Dendritic cell treated with granulocyte-macrophage colony-stimulating factor and Interleukin-4, amounts not matched to agents 40 ng/mL and 50 ng/mL, for 4 days (primary cell): ENCODE measurements at regions of chr2 and their contacts with region 1.

Region 1: GRCh38 chr2:46461011-46461674 is 18.2 kb upstream of the TMEM247 start:
- H3K4me3 Mint-ChIP-seq: peak overlapping the region; percentile 45
- H3K27ac Mint-ChIP-seq: peak overlapping the region; percentile 91
- H3K4me1 Mint-ChIP-seq: peaks cover 40% of the 10 kb centered on the region
- H3K27me3 Mint-ChIP-seq: peaks cover 2% of the 10 kb centered on the region

Region 2: GRCh38 chr2:45889053-45889452 is 572.1 kb before region 1 on chr2:
- intact Hi-C with region 1: no loop called
- H3K4me3 Mint-ChIP-seq: no peak overlapping the region
- H3K27ac Mint-ChIP-seq: no peak overlapping the region
- H3K4me1 Mint-ChIP-seq: peaks cover 88% of the 10 kb centered on the region
- H3K27me3 Mint-ChIP-seq: peaks cover 15% of the 10 kb centered on the region

Region 3: DNA sequence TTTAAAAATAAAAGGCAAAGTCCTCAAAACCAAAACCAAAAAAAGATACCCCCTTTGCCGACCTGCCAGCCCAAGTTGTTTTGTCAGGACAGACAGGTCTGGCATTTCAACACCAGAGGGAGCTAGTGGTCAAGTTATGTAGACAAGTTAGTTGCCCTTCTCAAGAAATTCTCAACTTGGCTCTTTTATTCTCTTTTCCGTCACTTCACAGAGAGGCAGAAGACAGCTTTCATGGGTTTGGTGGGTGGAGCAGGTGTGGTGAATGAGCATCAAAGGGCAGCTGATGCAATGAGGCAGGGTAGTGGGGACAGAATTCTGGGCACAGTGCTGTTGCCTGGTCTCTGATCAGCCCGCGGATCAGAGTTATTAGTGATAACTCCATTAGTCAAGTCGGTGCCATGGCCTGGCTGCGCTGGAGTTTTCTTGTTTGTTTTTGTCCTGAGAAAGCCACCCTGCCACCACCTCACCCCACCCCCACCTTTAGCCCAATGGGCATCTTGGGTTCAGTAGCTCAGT is 467.6 kb before region 1 on chr2:
- intact Hi-C with region 1: loop called (anchors 1 kb)
- H3K4me3 Mint-ChIP-seq: no peak overlapping the region
- H3K27ac Mint-ChIP-seq: no peak overlapping the region
- H3K4me1 Mint-ChIP-seq: peaks cover 6% of the 10 kb centered on the region
- H3K27me3 Mint-ChIP-seq: no peaks in the 10 kb centered on the region

Region 4: GRCh38 chr2:46010925-46011490 is 450.1 kb before region 1 on chr2:
- intact Hi-C with region 1: loop called (anchors 1 kb)
- H3K4me3 Mint-ChIP-seq: no peak overlapping the region
- H3K27ac Mint-ChIP-seq: no peak overlapping the region
- H3K4me1 Mint-ChIP-seq: no peaks in the 10 kb centered on the region
- H3K27me3 Mint-ChIP-seq: no peaks in the 10 kb centered on the region

Region 5: DNA sequence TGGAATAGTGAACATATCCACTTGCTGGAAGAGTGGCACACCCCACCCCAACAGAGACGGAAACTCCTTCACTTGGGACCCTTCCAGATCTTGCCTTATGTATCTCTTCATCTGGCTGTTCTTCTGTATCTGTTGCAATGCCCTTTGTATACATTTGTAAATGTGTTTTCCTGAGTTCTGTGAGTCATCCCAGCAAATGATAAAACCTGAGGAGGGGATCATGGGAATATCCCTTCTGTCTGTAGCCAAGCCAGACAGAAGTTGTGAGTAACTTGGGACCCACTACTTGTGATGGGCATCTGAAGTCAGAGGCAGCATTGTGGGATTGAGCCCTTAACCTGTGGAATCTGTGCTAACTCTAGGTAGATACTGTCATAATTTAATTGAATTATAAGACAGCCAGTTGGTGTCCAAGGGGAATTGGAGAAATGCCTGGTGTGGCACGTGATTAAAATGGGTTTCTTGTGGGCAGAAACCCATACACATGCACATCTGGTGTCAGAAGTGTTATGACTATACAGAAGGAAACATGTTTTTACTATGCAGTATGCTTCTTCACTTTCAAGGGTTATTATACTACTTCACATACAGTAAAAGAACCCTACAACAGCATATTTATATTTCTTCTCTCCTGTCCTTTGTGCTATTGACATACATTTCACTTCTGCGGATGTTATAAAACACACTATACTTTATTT is 14.1 kb before region 1 on chr2:
- intact Hi-C with region 1: no loop called
- H3K4me3 Mint-ChIP-seq: no peak overlapping the region
- H3K27ac Mint-ChIP-seq: no peak overlapping the region
- H3K4me1 Mint-ChIP-seq: no peaks in the 10 kb centered on the region
- H3K27me3 Mint-ChIP-seq: no peaks in the 10 kb centered on the region

Region 6: DNA sequence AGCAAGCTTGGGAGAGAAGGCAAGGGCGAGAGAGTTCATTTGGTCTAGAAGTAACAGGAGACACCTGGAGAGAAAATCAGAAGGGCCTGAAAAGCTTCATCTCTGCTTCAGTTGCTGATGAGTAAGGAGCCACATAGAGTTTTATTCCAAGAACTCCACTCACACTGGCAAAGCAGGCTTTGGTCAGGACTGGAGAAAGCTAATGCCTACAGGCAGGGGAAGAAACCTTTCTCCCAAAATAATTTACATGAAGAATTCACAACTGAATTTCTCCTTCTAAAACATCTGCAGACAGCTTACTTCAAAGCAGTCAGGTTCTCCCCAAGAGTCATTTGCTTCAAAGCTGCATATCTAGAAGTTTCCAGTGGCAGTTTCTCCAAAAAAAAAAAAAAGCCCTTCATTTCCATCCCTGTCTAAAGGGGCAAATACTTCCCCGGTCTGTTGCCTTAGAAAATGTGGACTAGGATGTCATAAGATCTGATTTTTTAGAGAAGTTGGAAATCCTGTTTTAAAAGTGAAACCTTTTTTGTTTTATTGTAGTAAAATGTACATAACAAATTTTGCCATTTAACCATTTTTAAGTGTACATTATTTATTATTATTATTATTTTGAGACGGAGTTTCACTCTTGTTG is 64.5 kb after region 1 on chr2:
- intact Hi-C with region 1: no loop called
- H3K4me3 Mint-ChIP-seq: no peak overlapping the region
- H3K27ac Mint-ChIP-seq: peak overlapping the region; percentile 14
- H3K4me1 Mint-ChIP-seq: peaks cover 47% of the 10 kb centered on the region
- H3K27me3 Mint-ChIP-seq: no peaks in the 10 kb centered on the region

Region 7: GRCh38 chr2:47119001-47119400 is 657.9 kb after region 1 on chr2:
- intact Hi-C with region 1: no loop called
- H3K4me3 Mint-ChIP-seq: no peak overlapping the region
- H3K27ac Mint-ChIP-seq: no peak overlapping the region
- H3K4me1 Mint-ChIP-seq: peaks cover 21% of the 10 kb centered on the region
- H3K27me3 Mint-ChIP-seq: no peaks in the 10 kb centered on the region